ENCODE measurements at regions of chrX and their contacts with region 1.

Region 1: GRCh38 chrX:111244235-111244750 is 26.0 kb downstream of the CAPN6 start:
- DNase-seq: peak; percentile 17
- H3K27ac ChIP-seq: no peak overlapping the region
- CTCF ChIP-seq: peak; percentile 36

Region 2: DNA sequence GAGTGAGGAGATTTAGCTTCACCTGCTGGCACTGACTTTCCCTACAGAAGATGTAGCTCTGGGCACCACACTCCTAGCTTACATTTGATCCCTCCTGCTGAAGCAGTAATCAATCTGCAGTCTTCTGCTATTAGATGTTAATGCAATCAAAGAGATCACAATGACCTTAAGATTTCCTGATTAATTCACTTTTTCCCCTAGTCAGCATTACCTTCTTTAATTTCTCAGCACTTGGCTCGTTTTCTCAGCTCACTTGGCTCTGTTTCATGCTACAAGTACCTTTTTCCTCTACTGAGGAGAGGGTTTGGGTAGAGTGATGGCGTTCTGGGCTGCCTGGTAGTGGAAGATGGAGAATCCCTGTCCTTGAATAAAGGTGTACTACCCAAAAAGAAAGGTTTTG is 261.3 kb before region 1 on chrX:
- CTCF ChIA-PET with region 1: interaction called, 16 read pairs
- POLR2A ChIA-PET with region 1: no interaction called
- DNase-seq: no peak
- H3K27ac ChIP-seq: no peak overlapping the region
- CTCF ChIP-seq: no peak

Measured in RWPE1 (cell line).